Right lobe of liver (tissue), 6 donors: ENCODE measurements at regions of chr7 and their contacts with region 1.

Region 1: DNA sequence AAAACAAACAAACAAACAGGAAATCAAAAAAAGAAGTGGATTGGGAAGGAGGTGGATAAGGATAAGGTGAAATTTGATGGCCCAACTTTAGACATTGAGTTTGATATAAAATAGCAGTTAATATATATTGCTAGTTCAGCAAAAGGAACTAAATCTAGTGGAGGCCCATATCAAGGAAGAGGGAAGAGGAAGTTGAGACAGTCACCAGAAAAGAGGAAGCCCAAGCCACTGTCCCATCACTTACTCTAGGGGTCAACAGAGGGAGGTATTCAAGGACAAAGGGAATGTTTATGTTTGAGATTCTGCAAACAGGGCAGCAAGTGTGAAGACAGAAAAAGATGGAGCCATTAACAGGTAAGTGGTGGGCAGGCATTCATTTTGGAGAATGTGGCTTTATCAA is 3.7 kb downstream of the LAMTOR4 start:
- DNase-seq: no peak
- ATAC-seq: no peak
- H3K4me3 ChIP-seq: no peak overlapping the region
- H3K27ac ChIP-seq: no peak overlapping the region
- H3K4me1 ChIP-seq: peaks cover 0 to 20% (median 0%) of the 10 kb centered on the region in 4 donors
- H3K27me3 ChIP-seq: no peaks in the 10 kb centered on the region
- CTCF ChIP-seq: no peak
- POLR2A ChIP-seq: no peak

Region 2: GRCh38 chr7:100109521-100110162 is 42.8 kb before region 1 on chr7:
- intact Hi-C with region 1: no loop called
- DNase-seq: no peak
- ATAC-seq: no peak
- H3K4me3 ChIP-seq: no peak overlapping the region
- H3K27ac ChIP-seq: no peak overlapping the region
- H3K4me1 ChIP-seq: no peaks in the 10 kb centered on the region
- H3K27me3 ChIP-seq: no peaks in the 10 kb centered on the region
- CTCF ChIP-seq: no peak
- POLR2A ChIP-seq: no peak

Region 3: DNA sequence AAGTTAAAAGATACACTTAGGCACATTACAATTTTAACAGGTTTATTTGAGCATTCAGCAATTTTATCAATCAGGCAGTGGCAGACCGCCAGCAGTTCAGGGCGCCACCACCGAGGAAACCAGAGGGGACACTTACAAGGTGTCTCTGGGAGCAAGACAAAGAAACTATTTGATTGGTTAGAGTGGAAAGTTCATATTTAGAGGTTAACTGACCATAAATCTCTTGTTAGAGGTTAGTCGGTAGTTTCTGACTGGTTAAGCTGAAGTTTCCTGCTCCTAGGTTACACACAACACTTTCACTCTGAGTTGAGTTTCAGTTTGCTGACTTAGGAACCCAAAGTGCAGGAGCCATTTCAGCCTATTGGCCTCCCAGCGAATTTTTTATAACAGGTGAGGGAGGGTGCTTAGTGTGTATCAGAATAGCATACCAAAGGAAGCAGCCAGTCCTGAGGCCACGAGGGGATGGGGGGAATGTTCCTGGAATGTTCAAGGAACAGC is 56.6 kb after region 1 on chr7:
- intact Hi-C with region 1: loop called in 1 of 2 experiments (anchors 5 kb)
- DNase-seq: no peak
- ATAC-seq: peak; percentile 26 to 61 (median 42)
- H3K4me3 ChIP-seq: peak overlapping the region in 2 of 3 donors; percentile 1 to 19
- H3K27ac ChIP-seq: peak overlapping the region in 1 of 3 donors; percentile 53
- H3K4me1 ChIP-seq: peaks cover 0 to 35% (median 10%) of the 10 kb centered on the region in 4 donors
- H3K27me3 ChIP-seq: no peaks in the 10 kb centered on the region
- CTCF ChIP-seq: peak in 1 of 4 donors; percentile 2
- POLR2A ChIP-seq: no peak